WTC11 (cell line): ENCODE measurements at regions of chr6 and their contacts with region 1.

Region 1: DNA sequence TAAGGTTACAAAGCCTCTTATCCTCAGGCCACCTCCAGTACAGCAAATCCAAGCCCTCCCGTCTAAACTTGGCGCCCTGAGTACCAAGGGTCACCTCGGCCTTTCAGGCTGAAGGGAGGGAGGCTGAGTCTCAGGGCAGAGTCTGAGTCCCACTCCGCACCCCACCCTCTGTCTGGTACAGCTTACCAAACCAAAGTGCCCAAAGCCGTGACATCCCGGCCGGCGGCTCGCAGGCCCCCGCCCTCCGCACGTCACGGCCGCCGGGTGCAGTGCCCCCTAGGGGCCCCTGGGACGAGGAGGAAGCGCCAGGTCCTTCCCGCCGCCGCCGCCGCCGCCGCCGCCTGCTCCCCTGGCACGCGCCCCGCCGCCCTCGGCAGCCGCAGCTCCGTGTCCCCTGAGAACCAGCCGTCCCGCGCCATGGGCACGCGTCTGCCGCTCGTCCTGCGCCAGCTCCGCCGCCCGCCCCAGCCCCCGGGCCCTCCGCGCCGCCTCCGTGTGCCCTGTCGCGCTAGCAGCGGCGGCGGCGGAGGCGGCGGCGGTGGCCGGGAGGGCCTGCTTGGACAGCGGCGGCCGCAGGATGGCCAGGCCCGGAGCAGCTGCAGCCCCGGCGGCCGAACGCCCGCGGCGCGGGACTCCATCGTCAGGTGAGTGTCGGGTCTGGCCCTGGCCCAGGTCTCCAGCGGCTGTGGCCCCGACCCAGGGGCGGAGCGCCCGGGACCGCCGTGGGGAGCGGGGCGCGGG is at the start of gene MTHFD1L:
- DNase-seq: peak; percentile 81
- ATAC-seq: peak; percentile 75
- H3K4me3 Mint-ChIP-seq: peak within 1 kb of the TSS; percentile 88
- H3K27ac Mint-ChIP-seq: 0 out of 2 replicates have a peak within 1 kb of the TSS, but pooled peaks have one; percentile 70
- H3K4me1 Mint-ChIP-seq: peaks cover 12% of the 10 kb centered on the region
- H3K27me3 Mint-ChIP-seq: no peaks in the 10 kb centered on the region
- CTCF ChIP-seq: peak; percentile 50
- total RNA-seq, gene MTHFD1L: 83.2 to 104 TPM (median 88.0 TPM) in 3 replicates

Region 2: GRCh38 chr6:150876598-150876997 is 11.0 kb after region 1 on chr6:
- CTCF ChIA-PET with region 1: interaction called, 12 read pairs
- POLR2A ChIA-PET with region 1: interaction called, 12 read pairs
- DNase-seq: no peak
- ATAC-seq: no peak
- H3K4me3 Mint-ChIP-seq: no peak overlapping the region
- H3K27ac Mint-ChIP-seq: peak overlapping the region; percentile 65; the same call in 1 of the 2 replicates
- H3K4me1 Mint-ChIP-seq: peaks cover 63% of the 10 kb centered on the region
- H3K27me3 Mint-ChIP-seq: no peaks in the 10 kb centered on the region
- CTCF ChIP-seq: no peak